Activated CD4-positive, alpha-beta T cell treated with anti-CD3 and anti-CD28 coated beads, Interleukin-2, amount 10 ng/mL, durations not matched to agents 24 days and 14 days (primary cell): ENCODE measurements at regions of chr1 and their contacts with region 1.

Region 1: DNA sequence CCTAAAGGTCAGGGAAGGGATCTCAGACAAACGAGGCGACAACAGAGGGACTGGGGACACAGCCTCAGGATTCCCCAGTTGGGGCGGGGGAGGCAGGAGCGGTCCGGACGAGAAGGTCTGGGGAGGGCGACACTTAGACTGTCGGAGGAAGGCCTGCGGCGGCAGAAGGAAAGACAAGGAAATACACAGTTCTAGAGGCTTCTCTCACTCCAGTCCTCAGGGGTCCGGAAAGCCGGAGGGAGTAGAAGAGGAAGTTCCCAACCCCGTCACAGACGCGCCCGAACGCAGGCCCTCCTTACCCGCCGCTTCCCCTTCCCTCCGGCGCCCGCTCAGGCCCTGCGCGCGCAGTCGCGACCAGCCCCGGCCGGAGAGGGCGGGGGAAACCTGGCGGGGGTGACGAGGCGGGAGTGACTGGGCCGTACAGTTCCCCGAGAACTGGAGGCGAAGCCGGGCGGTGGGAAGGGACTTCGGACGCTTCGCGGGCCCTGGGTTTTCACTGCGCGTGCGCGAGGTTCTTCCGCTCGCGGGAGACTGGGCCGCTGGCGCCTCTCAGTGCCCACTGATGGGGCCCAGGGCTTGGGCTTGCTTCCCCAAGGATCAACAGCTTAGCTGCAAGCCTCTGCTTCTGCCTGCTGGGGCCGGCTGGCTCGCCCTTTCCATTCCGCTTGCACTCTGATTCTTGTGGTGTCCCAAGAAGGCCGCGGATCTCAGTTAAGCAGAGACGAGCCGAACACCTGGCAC is at the start of gene IPP:
- DNase-seq: peak; percentile 99
- H3K4me3 Mint-ChIP-seq: peak within 1 kb of the TSS; percentile 100
- H3K27ac Mint-ChIP-seq: peak within 1 kb of the TSS; percentile 97
- H3K4me1 Mint-ChIP-seq: peaks cover 14% of the 10 kb centered on the region
- H3K27me3 Mint-ChIP-seq: no peaks in the 10 kb centered on the region
- total RNA-seq, gene IPP: 13.8 and 15.3 TPM in 2 replicates

Region 2: DNA sequence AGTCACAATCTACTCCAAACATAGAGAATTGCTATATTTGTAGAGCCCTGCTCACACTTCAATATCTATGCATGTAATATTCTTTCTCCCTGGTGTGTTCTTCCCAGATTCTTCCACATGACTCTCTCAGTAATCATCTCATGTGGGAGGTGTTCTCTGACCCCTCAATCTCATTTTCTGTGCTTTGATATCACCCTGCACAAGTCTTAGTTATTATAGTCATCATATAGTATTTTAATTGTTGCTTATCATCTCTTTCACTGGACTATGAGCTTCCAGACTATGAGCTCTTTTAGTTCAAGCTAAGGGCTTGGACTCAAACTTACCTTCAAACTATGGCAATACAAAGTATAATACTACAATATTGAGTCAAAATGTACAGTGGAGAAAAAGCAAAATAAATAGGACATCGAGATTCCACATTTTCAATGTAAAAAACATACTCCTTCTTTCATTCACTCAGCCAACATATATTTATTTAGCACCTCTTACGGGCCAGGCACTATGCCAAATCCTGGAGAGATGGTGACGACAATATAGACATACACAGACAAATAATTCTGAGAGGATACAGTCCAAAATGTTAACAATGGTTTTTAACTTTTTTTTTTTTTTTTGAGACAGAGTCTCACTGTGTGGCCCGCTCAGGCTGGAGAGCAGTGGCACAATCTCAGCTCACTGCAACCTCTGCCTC is 272.2 kb before region 1 on chr1:
- intact Hi-C with region 1: no loop called
- DNase-seq: no peak
- H3K4me3 Mint-ChIP-seq: no peak overlapping the region
- H3K27ac Mint-ChIP-seq: no peak overlapping the region
- H3K4me1 Mint-ChIP-seq: peaks cover 3% of the 10 kb centered on the region
- H3K27me3 Mint-ChIP-seq: no peaks in the 10 kb centered on the region

Region 3: DNA sequence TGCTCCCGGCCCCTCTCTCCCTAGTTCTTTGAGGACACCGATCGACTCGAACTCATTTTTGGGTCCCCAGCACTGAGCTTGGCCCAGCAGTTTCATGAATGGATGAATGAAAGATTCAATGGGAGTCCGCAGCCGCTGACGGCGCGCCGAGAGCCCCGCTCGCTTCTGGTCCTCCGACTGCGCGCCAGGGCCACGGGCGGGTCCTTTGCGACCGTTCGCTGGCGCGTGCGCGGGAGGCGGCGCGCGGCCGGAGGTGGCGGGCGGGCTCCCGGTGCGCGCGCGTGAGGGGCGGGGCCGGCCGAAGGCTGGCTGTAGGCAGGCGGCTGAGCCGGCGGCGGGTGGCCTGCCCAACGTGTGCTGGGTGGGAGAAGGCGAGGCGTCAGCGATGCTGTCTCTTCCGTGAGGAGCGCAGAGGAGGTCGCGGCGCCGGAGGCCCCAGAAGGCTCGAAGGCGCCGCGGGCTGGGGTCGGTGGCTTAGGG is 52.9 kb after region 1 on chr1 and contains the start of gene MAST2:
- intact Hi-C with region 1: loop called (anchors 2 kb)
- DNase-seq: peak; percentile 97
- H3K4me3 Mint-ChIP-seq: peak within 1 kb of the TSS; percentile 93
- H3K27ac Mint-ChIP-seq: peak within 1 kb of the TSS; percentile 78
- H3K4me1 Mint-ChIP-seq: peaks cover 28% of the 10 kb centered on the region
- H3K27me3 Mint-ChIP-seq: no peaks in the 10 kb centered on the region
- total RNA-seq, gene MAST2: 31.4 and 33.1 TPM in 2 replicates

Region 4: DNA sequence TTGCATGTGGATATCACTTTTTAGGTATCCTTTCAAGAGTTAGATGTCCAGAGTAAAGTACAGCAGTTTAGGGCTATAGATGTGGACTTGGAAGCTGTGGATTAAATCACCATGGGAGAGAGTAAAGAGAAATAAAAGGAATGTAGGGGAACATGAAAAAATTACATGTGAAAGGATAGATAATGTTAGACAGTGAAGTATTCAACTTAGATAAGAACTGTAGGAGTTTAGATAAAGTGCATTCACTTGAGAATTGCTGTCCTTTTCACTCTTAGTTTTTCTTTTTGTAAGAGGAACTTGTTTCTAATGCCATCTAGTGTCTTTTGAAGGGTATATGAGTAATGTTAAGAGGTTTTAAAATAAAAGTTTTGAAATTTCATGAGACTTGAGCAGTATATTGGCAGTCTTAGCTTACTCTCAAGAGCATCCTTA is 93.0 kb after region 1 on chr1:
- intact Hi-C with region 1: loop called (anchors 2 kb)
- DNase-seq: no peak
- H3K4me3 Mint-ChIP-seq: peak overlapping the region; percentile 22
- H3K27ac Mint-ChIP-seq: peak overlapping the region; percentile 68
- H3K4me1 Mint-ChIP-seq: peaks cover 12% of the 10 kb centered on the region
- H3K27me3 Mint-ChIP-seq: no peaks in the 10 kb centered on the region

Region 5: GRCh38 chr1:46197964-46198811 is 447.7 kb after region 1 on chr1 and contains the start of gene POMGNT1:
- intact Hi-C with region 1: loop called (anchors 5 kb)
- DNase-seq: peak; percentile 96
- H3K4me3 Mint-ChIP-seq: peak within 1 kb of the TSS; percentile 89
- H3K27ac Mint-ChIP-seq: peak within 1 kb of the TSS; percentile 85
- H3K4me1 Mint-ChIP-seq: peaks cover 20% of the 10 kb centered on the region
- H3K27me3 Mint-ChIP-seq: peaks cover 2% of the 10 kb centered on the region
- total RNA-seq, gene POMGNT1: 75.1 and 83.0 TPM in 2 replicates